Activated CD4-positive, alpha-beta memory T cell treated with anti-CD3 and anti-CD28 coated beads, Interleukin-2, amount 10 ng/mL, durations not matched to agents 7 days and 5 days (primary cell): ENCODE measurements at regions of chr5 and their contacts with region 1.

Region 1: GRCh38 chr5:103139264-103139865 is 19.3 kb downstream of the PPIP5K2 start:
- DNase-seq: peak; percentile 83
- H3K4me3 Mint-ChIP-seq: no peak overlapping the region
- H3K27ac Mint-ChIP-seq: no peak overlapping the region
- H3K4me1 Mint-ChIP-seq: peaks cover 2% of the 10 kb centered on the region
- H3K27me3 Mint-ChIP-seq: no peaks in the 10 kb centered on the region

Region 2: DNA sequence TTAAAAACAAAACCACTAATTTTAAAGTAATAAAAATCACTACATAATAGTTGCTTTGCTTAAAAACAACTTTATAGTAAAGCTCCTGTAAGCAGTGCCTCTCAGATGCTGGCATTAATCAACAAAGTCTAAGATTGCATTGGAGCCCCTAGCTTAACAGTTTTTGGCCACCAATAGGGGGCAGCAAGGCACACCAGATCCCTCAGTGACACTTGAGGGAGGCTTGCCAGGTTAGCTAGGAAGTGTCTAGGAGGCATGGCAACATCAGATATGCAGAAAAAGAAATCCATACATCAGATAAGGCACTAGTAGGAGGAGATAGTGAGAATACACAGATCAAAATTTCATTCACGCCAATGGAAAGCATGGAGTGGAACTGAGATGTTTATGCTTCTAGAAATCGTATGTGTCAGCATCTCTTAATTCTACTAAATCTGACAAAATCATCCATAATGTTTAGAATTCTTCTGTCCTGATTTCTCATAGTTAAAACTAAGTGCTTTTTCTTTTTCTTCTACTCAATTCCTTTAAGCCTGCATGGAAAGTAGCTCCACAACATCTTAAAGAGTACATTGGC is 457.9 kb before region 1 on chr5:
- CTCF ChIA-PET with region 1: interaction called, 11 read pairs
- POLR2A ChIA-PET with region 1: no interaction called
- DNase-seq: peak; percentile 59
- H3K4me3 Mint-ChIP-seq: no peak overlapping the region
- H3K27ac Mint-ChIP-seq: no peak overlapping the region
- H3K4me1 Mint-ChIP-seq: no peaks in the 10 kb centered on the region
- H3K27me3 Mint-ChIP-seq: peaks cover 5% of the 10 kb centered on the region

Region 3: GRCh38 chr5:102778478-102778877 is 360.9 kb before region 1 on chr5:
- CTCF ChIA-PET with region 1: interaction called, 23 read pairs
- POLR2A ChIA-PET with region 1: no interaction called
- DNase-seq: no peak
- H3K4me3 Mint-ChIP-seq: no peak overlapping the region
- H3K27ac Mint-ChIP-seq: no peak overlapping the region
- H3K4me1 Mint-ChIP-seq: peaks cover 36% of the 10 kb centered on the region
- H3K27me3 Mint-ChIP-seq: no peaks in the 10 kb centered on the region